Mammary epithelial cell (primary cell): ENCODE measurements at regions of chr10 and their contacts with region 1.

Region 1: GRCh38 chr10:73956476-73957359 is 41.2 kb upstream of the VCL start:
- DNase-seq: peak; percentile 55
- H3K4me3 ChIP-seq: no peak overlapping the region
- H3K27ac ChIP-seq: no peak overlapping the region
- H3K4me1 ChIP-seq: peaks cover 13% of the 10 kb centered on the region
- H3K27me3 ChIP-seq: no peaks in the 10 kb centered on the region
- CTCF ChIP-seq: no peak

Region 2: GRCh38 chr10:72509206-72509799 is 1447.4 kb before region 1 on chr10:
- CTCF ChIA-PET with region 1: no interaction called
- dilution Hi-C with region 1: no loop called
- in situ Hi-C with region 1: no loop called
- intact Hi-C with region 1: no loop called
- DNase-seq: peak; percentile 53
- H3K4me3 ChIP-seq: no peak overlapping the region
- H3K27ac ChIP-seq: no peak overlapping the region
- H3K4me1 ChIP-seq: no peaks in the 10 kb centered on the region
- H3K27me3 ChIP-seq: no peaks in the 10 kb centered on the region
- CTCF ChIP-seq: no peak

Region 3: GRCh38 chr10:73920089-73920488 is 36.6 kb before region 1 on chr10:
- CTCF ChIA-PET with region 1: no interaction called
- dilution Hi-C with region 1: no loop called
- in situ Hi-C with region 1: no loop called
- intact Hi-C with region 1: no loop called
- DNase-seq: peak; percentile 95
- H3K4me3 ChIP-seq: no peak overlapping the region
- H3K27ac ChIP-seq: peak overlapping the region; percentile 96
- H3K4me1 ChIP-seq: peaks cover 43% of the 10 kb centered on the region
- H3K27me3 ChIP-seq: no peaks in the 10 kb centered on the region
- CTCF ChIP-seq: peak in 1 of 2 donors; percentile 27

Region 4: DNA sequence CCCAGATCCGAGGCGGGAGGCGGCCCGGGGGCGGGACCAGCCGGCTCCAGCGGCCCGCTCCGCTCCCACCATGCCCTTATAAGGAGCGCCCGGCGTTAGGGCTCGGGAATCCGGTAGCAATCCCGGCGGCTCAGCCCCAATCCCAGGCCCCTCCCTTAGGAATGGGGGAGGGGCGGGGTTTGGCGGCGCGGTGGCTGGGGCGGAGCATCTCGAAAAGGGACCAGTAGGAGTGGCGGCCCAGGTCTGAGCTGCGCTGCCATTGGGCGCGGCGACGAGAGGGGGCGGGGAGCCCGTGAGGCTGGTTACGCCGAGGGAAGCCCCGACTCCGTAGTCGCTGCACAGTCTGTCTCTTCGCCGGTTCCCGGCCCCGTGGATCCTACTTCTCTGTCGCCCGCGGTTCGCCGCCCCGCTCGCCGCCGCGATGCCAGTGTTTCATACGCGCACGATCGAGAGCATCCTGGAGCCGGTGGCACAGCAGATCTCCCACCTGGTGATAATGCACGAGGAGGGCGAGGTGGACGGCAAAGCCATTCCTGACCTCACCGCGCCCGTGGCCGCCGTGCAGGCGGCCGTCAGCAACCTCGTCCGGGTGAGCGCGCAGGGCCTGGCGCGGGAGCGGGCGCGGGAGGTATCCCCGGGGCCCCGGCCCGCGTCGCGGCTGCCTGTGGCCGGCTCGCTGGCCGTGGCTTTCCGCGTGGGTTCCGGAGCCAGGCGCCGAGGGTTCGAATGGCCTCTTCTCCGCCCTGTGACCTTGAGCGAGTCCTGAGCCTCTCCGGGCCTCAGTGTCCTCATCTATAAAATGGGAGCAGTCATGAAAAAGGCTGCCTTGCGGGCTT is 41.3 kb after region 1 on chr10 and contains the start of gene VCL:
- CTCF ChIA-PET with region 1: no interaction called
- dilution Hi-C with region 1: no loop called
- in situ Hi-C with region 1: no loop called
- intact Hi-C with region 1: loop called (anchors 1 kb)
- DNase-seq: peak; percentile 99
- H3K4me3 ChIP-seq: peak within 1 kb of the TSS; percentile 61 to 92 (median 90)
- H3K27ac ChIP-seq: peak within 1 kb of the TSS; percentile 72
- H3K4me1 ChIP-seq: peaks cover 26% of the 10 kb centered on the region
- H3K27me3 ChIP-seq: no peaks in the 10 kb centered on the region
- CTCF ChIP-seq: no peak
- total RNA-seq, gene VCL: 136 to 172 TPM

Region 5: GRCh38 chr10:74008212-74008731 is 51.6 kb after region 1 on chr10:
- CTCF ChIA-PET with region 1: no interaction called
- dilution Hi-C with region 1: no loop called
- in situ Hi-C with region 1: no loop called
- intact Hi-C with region 1: no loop called
- DNase-seq: peak; percentile 61
- H3K4me3 ChIP-seq: no peak overlapping the region
- H3K27ac ChIP-seq: peak overlapping the region; percentile 64
- H3K4me1 ChIP-seq: peaks cover 28% of the 10 kb centered on the region
- H3K27me3 ChIP-seq: no peaks in the 10 kb centered on the region
- CTCF ChIP-seq: no peak

Region 6: DNA sequence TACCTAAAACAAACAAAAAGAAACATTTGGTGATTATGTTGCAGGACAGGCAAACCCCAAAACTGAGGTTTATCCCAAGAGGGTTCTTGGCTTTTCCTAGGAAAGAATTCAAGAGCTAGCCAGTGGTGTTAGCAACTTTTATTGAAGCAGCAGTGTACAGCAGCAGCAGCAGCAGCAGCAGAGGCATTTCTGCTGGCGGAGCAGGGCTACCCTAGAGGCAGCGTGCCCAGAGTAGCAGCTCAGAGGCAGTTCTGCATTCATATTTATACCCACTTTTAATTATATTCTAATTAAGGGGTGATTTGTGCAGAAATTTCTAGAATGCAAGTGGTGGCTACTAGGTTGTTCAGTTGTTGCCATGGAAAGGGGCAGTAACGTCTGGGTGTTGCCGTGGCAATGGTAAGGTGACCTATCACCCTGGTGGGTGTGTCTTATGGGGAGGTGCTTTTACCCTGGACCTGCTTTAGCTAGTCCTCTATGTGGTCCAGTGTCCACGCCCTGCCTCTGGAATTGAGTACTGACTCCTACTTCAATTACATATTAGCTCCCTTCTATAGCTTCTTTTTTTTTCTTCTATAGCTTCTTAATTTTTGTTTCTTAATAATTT is 95.1 kb after region 1 on chr10:
- CTCF ChIA-PET with region 1: interaction called, 10 read pairs
- dilution Hi-C with region 1: no loop called
- in situ Hi-C with region 1: no loop called
- intact Hi-C with region 1: no loop called
- DNase-seq: no peak
- H3K4me3 ChIP-seq: no peak overlapping the region
- H3K27ac ChIP-seq: no peak overlapping the region
- H3K4me1 ChIP-seq: peaks cover 19% of the 10 kb centered on the region
- H3K27me3 ChIP-seq: no peaks in the 10 kb centered on the region
- CTCF ChIP-seq: no peak

Region 7: GRCh38 chr10:74071157-74071556 is 114.4 kb after region 1 on chr10:
- CTCF ChIA-PET with region 1: interaction called, 10 read pairs
- dilution Hi-C with region 1: no loop called
- in situ Hi-C with region 1: no loop called
- intact Hi-C with region 1: no loop called
- DNase-seq: no peak
- H3K4me3 ChIP-seq: no peak overlapping the region
- H3K27ac ChIP-seq: no peak overlapping the region
- H3K4me1 ChIP-seq: no peaks in the 10 kb centered on the region
- H3K27me3 ChIP-seq: no peaks in the 10 kb centered on the region
- CTCF ChIP-seq: no peak

Region 8: GRCh38 chr10:74529205-74529604 is 572.5 kb after region 1 on chr10:
- CTCF ChIA-PET with region 1: no interaction called
- dilution Hi-C with region 1: no loop called
- in situ Hi-C with region 1: no loop called
- intact Hi-C with region 1: no loop called
- DNase-seq: no peak
- H3K4me3 ChIP-seq: no peak overlapping the region
- H3K27ac ChIP-seq: no peak overlapping the region
- H3K4me1 ChIP-seq: no peaks in the 10 kb centered on the region
- H3K27me3 ChIP-seq: no peaks in the 10 kb centered on the region
- CTCF ChIP-seq: no peak